ENCODE measurements at regions of chr5 and their contacts with region 1.

Region 1: GRCh38 chr5:139482050-139482889 is at the start of gene STING1:
- DNase-seq: peak; percentile 90
- H3K4me3 Mint-ChIP-seq: peak within 1 kb of the TSS; percentile 100
- H3K27ac Mint-ChIP-seq: peak within 1 kb of the TSS; percentile 100
- H3K4me1 Mint-ChIP-seq: peaks cover 46% of the 10 kb centered on the region
- H3K27me3 Mint-ChIP-seq: no peaks in the 10 kb centered on the region
- total RNA-seq, gene STING1: 136 to 140 TPM

Region 2: DNA sequence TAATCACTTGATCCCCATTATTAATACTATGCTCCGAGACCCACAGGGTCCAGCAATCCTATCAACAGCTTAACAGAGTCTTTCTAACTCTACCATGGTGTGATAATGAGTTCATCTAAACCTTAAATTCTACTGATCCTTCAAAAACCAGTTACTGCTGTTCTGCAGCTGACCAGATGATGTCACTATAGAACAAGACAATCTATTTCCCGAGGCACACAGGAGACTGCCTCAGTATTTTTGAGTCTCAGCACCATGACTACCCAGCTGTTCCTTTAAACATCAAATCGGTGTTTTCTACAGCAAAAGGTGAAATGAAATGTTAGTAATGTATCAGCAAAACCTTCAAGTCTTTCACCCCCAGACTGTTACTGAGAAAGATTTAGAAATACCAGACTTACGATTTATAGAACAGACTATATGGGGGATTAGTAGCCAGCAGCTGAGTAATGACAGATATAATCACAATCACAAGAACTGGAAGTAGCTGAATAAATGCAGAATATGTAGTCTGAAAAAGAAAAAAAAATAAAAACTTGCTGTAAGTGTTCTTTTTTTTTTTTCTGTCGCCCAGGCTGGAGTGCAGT is 59.9 kb before region 1 on chr5:
- CTCF ChIA-PET with region 1: interaction called, 20 read pairs
- intact Hi-C with region 1: loop called (anchors 1 kb)
- DNase-seq: peak; percentile 77
- H3K4me3 Mint-ChIP-seq: no peak overlapping the region
- H3K27ac Mint-ChIP-seq: no peak overlapping the region
- H3K4me1 Mint-ChIP-seq: peaks cover 5% of the 10 kb centered on the region
- H3K27me3 Mint-ChIP-seq: no peaks in the 10 kb centered on the region

Region 3: GRCh38 chr5:139439013-139439903 is 43.0 kb before region 1 on chr5 and contains the start of gene DNAJC18:
- CTCF ChIA-PET with region 1: interaction called, 3 read pairs
- intact Hi-C with region 1: loop called (anchors 1 kb)
- DNase-seq: peak; percentile 94
- H3K4me3 Mint-ChIP-seq: peak within 1 kb of the TSS; percentile 95
- H3K27ac Mint-ChIP-seq: peak within 1 kb of the TSS; percentile 98
- H3K4me1 Mint-ChIP-seq: peaks cover 42% of the 10 kb centered on the region
- H3K27me3 Mint-ChIP-seq: no peaks in the 10 kb centered on the region
- total RNA-seq, gene DNAJC18: 18.1 to 18.8 TPM

Region 4: DNA sequence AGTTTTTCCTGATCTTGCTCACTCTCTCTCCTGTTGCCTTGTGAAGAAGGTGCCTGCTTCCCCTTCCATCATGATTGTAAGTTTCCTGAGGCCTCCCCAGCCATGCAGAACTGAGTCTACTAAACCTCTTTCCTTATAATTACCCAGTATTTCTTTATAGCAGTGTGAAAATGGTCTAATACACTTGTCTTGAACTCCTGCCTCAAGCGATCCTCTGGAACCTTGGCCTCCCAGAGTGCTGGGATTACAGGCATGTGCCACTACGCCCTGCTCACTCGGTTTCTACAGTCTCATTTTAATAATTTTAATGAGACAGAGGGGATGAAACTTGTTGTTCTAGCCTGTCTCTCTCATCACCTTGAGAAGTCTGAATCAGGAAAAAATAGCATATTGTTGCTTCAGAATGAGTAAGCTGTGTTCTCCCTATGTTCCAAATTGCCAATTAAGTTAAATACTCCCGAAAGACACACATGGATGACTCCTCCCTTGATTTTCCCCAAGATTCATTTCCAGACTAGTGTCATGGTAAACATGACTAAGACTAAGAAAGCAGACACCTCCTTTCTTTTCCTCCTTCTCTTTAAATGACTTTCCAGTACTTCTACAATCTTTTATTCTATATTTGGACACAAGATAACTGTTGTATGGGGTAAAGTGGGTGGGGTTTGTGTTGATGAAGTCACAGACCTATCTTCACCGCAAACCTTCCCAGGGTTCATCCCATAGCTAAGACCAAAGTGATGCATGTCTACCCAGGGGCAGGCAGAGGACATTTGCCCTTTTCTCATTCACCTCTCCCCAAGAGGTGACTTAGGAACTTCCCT is 35.1 kb before region 1 on chr5:
- CTCF ChIA-PET with region 1: interaction called, 12 read pairs
- intact Hi-C with region 1: loop called (anchors 1 kb)
- DNase-seq: peak; percentile 68
- H3K4me3 Mint-ChIP-seq: no peak overlapping the region
- H3K27ac Mint-ChIP-seq: peak overlapping the region; percentile 97
- H3K4me1 Mint-ChIP-seq: peaks cover 63% of the 10 kb centered on the region
- H3K27me3 Mint-ChIP-seq: no peaks in the 10 kb centered on the region

Region 5: DNA sequence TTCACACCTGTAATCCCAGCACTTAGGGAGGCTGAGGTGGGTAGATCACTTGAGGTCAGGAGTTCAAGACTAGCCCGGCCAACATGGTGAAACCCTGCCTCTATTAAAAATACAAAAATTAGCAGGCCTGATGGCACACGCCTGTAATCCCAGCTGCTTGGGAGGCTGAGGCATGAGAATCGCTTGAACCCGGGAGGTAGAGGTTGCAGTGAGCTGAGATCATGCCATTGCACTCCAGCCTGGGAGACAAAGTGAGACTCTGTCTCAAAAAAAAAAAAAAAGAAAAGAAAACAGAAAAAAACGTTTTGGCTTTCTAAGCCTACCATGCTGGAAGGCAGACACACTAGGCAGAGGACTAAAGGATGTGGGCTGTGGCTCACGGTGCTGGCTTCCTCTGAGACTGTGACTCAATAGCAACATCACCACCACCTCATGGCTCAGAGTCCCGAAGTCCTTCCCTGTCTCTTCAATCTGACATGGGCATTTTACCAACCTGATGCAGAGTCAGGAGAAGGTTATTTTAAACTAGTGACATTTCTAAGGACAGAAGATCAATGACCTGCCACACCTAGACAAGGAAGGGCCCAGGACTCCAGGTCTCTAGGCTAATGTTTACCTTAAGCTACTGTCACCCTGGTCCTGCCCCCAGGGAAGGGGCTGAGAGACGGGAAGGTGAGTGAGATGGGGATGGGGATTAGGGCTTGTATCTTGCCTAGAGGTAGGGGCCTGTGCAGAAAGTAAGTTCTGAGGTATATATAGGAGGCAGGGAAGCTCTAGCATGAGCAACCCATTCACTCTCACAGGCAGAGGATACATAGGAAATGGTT is 23.5 kb before region 1 on chr5:
- CTCF ChIA-PET with region 1: interaction called, 7 read pairs
- intact Hi-C with region 1: loop called (anchors 1 kb)
- DNase-seq: peak; percentile 93
- H3K4me3 Mint-ChIP-seq: peak overlapping the region; percentile 50
- H3K27ac Mint-ChIP-seq: peak overlapping the region; percentile 94
- H3K4me1 Mint-ChIP-seq: peaks cover 54% of the 10 kb centered on the region
- H3K27me3 Mint-ChIP-seq: no peaks in the 10 kb centered on the region

Region 6: DNA sequence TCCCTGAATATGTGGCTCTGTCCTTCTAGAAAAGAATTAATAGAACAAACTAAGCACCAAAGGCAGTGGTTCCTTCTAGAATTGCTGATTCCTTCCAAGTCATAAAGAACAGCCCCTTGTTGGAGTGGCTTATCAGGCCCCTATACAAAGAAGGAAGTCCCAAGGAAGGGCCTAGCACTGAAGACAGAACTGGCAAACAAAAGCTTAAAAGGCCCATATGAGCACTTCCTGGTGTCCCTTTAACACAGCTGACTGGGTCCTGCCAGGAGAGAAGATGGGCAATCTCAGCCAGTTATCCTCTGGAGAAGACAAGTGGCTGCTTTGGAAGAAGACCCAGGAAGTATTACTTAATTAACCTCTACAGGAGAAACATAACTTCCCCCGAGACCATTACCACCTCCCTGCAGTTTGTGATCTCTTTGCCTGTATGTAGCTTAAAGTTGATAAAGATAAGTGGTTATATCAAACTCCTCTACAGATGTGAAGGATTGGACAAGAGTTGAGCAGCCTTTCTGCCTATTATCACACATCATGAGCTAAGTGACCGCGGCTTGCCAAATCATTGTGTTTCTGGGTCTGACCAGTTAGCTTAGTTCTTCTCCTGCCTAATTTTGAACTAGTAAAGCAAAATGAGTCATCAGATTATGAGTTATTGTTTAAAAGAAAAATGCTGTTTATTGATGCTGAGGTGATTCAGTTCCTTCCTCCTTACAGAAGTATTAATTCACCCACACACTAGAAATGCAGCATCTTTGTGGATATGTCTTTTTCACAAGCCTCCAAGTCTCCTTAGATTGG is 13.6 kb after region 1 on chr5:
- CTCF ChIA-PET with region 1: interaction called, 23 read pairs
- intact Hi-C with region 1: no loop called
- DNase-seq: peak; percentile 46
- H3K4me3 Mint-ChIP-seq: no peak overlapping the region
- H3K27ac Mint-ChIP-seq: no peak overlapping the region
- H3K4me1 Mint-ChIP-seq: peaks cover 23% of the 10 kb centered on the region
- H3K27me3 Mint-ChIP-seq: no peaks in the 10 kb centered on the region